PC-3 (cell line): ENCODE measurements at regions of chr2 and their contacts with region 1.

Region 1: DNA sequence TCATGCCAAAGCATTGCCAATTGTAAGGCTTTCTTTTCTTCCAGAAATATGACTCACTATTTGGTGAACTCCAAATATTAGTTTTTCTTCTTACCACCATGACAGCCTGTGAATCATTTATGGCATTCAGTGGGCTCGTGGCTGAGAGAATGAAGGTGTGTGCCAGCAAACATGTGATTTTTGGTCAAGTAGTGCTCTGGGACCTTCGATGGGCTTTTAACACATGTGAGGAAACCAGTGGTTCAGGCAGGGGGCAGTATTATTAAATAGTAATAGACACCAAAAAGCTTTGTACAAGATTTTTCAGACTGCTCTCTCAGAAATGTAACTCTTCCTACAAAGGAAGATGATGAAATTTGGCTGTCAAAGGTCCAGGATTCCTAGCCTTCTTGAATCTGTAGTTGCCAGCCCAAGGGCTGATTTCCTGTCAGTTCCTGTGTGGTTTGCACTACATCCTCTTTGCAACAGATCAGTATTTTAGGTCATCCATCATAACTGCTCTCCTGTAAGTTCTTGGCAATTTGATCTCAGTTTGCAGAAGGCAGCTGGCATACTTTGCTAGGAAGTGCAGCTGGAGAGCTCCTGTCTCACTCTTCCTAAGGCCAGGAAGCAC is 64.3 kb downstream of the BABAM2 start:
- DNase-seq: peak; percentile 94
- ATAC-seq: peak; percentile 80
- H3K4me3 ChIP-seq: peak overlapping the region; percentile 49; the same call in 1 of the 2 replicates
- H3K27ac ChIP-seq: peak overlapping the region; percentile 93
- H3K4me1 ChIP-seq: peaks cover 68% of the 10 kb centered on the region
- H3K27me3 ChIP-seq: no peaks in the 10 kb centered on the region
- CTCF ChIP-seq: peak; percentile 47

Region 2: DNA sequence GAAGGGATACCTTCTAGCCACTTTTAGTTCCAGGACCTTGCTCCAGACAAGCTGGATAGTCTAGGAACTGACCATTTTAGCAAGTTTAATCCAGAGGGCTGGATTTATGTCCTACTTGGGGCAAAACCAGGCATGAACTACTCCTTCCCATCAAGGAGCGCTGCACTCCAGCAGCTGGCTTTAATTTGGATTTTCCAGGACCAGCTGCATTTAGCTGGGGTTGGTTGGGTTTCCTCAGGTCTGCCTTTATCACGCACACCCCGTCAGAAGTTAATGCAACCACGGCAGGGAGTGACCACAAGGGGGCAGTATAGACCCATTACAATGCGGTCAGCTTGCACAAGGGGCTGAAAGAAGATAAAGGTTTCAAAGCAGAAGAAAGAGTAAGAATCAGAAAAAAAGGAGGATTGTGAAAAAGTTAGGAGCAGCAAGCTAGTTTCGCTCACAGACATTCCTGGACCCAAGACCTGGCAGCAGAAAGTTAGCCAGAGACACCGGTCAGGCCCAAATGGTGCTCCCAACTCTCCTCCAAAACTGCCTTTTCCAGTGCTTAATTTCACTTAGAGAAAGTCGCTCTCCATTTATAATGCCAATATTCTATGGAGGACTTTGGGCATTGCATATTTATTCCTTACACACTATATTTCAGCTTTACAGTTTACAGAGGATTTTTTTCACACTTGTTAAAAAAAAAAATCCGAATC is 251.1 kb before region 1 on chr2:
- CTCF ChIA-PET with region 1: no interaction called
- POLR2A ChIA-PET with region 1: interaction called, 3 read pairs
- intact Hi-C with region 1: loop called (anchors 10 kb)
- DNase-seq: peak; percentile 94
- ATAC-seq: peak; percentile 62
- H3K4me3 ChIP-seq: no peak overlapping the region
- H3K27ac ChIP-seq: no peak overlapping the region
- H3K4me1 ChIP-seq: peaks cover 30% of the 10 kb centered on the region
- H3K27me3 ChIP-seq: no peaks in the 10 kb centered on the region
- CTCF ChIP-seq: peak; percentile 96

Region 3: DNA sequence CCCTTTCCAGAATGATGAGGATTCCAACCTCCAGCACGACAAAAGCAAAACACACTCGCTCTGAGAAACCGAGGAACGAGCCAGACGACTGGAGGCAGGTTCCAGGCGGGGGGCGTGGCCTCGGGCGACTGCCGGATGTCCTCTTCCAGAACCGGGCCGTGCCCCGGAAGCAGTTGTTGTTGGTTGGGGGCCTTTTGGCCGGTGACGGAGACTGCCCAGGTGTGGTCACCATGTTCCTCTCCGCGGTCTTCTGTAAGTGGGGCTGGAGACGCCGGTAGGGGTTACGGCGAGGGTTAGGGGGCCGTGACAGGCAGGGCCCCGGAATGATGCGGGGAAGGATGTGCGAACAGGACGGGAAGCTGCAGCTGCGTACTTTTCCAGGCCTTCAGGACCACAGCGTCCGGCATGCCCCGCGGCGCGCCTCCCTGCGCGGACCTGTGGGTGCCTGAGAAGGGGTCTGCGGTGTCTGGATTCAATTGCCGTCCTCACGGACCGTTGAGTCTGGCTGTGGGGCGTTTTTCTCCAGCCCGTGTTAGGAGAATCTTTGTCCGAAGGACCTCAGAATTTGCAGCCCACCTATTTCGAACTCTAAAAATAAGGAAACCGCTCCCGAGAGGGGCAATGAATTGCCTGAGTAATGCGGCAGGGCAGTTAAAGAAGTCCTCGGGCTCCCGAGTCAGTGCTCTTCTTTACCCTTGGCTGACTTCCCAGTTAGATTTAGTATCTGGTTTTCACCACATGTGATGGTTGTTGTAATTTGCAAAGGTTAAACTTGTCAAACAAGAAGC is 183.1 kb before region 1 on chr2 and contains the start of gene MRPL33:
- CTCF ChIA-PET with region 1: no interaction called
- POLR2A ChIA-PET with region 1: no interaction called
- intact Hi-C with region 1: loop called (anchors 10 kb)
- DNase-seq: peak; percentile 93
- ATAC-seq: peak; percentile 92
- H3K4me3 ChIP-seq: peak within 1 kb of the TSS; percentile 96
- H3K27ac ChIP-seq: peak within 1 kb of the TSS; percentile 62
- H3K4me1 ChIP-seq: peaks cover 40% of the 10 kb centered on the region
- H3K27me3 ChIP-seq: no peaks in the 10 kb centered on the region
- CTCF ChIP-seq: no peak
- total RNA-seq, gene MRPL33: 95.7 and 110 TPM in 2 replicates

Region 4: GRCh38 chr2:27890146-27890923 is 64.5 kb before region 1 on chr2 and contains the starts of genes BABAM2 and RBKS:
- CTCF ChIA-PET with region 1: no interaction called
- POLR2A ChIA-PET with region 1: no interaction called
- intact Hi-C with region 1: loop called (anchors 1 kb)
- DNase-seq: peak; percentile 87
- ATAC-seq: peak; percentile 86
- H3K4me3 ChIP-seq: peak within 1 kb of the TSS; percentile 88
- H3K27ac ChIP-seq: peak within 1 kb of the TSS; percentile 79
- H3K4me1 ChIP-seq: peaks cover 27% of the 10 kb centered on the region
- H3K27me3 ChIP-seq: no peaks in the 10 kb centered on the region
- CTCF ChIP-seq: no peak
- total RNA-seq, gene BABAM2: 16.3 and 17.9 TPM in 2 replicates
- total RNA-seq, gene RBKS: 1.8 and 2.6 TPM in 2 replicates

Region 5: DNA sequence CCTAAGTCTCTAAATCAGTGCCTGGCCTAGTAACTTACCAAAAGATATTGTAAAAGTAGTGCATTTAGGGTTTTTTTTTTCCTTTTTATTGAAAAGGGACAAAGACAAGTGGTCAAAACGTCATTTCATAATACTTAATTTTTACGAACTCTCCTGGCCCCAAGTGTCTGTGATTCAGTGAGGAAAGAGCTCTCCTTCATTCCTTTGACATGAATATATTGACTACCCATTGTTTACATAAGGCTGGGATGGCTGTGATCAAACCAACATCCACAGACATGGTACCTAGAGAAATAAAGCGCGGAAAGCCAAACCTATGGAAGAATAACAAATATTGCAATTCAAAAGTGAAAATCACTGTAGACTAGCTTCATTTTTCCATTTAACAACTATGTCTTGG is 134.1 kb after region 1 on chr2:
- CTCF ChIA-PET with region 1: no interaction called
- POLR2A ChIA-PET with region 1: no interaction called
- intact Hi-C with region 1: loop called (anchors 2 kb)
- DNase-seq: peak; percentile 79
- ATAC-seq: peak; percentile 95
- H3K4me3 ChIP-seq: peak overlapping the region; percentile 39
- H3K27ac ChIP-seq: no peak overlapping the region
- H3K4me1 ChIP-seq: peaks cover 28% of the 10 kb centered on the region
- H3K27me3 ChIP-seq: no peaks in the 10 kb centered on the region
- CTCF ChIP-seq: no peak

Region 6: DNA sequence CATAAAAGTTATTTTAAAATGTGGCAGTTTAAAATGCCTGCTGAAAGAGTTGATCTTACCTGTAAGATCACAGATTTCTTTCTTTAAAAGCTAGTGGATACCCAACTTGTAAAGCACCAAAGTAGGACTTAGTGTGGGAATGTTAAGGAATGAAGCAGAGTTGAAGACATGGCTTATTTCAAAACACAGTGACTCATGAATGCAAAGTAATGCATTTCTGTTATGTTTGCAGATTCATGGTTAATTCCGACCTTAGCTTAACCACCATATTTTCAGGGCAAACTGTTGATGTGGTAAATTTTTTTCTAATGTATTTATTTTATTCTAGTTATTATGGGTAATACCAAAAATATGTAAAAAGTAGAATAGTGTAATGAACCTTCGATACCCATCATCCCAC is 231.0 kb after region 1 on chr2:
- CTCF ChIA-PET with region 1: no interaction called
- POLR2A ChIA-PET with region 1: no interaction called
- intact Hi-C with region 1: no loop called
- DNase-seq: peak; percentile 15
- ATAC-seq: no peak
- H3K4me3 ChIP-seq: no peak overlapping the region
- H3K27ac ChIP-seq: peak overlapping the region; percentile 2; the same call in 1 of the 2 replicates
- H3K4me1 ChIP-seq: peaks cover 11% of the 10 kb centered on the region; the same call in 1 of the 2 replicates
- H3K27me3 ChIP-seq: no peaks in the 10 kb centered on the region
- CTCF ChIP-seq: no peak

Region 7: GRCh38 chr2:28209261-28209691 is 254.4 kb after region 1 on chr2:
- CTCF ChIA-PET with region 1: no interaction called
- POLR2A ChIA-PET with region 1: interaction called, 10 read pairs
- intact Hi-C with region 1: no loop called
- DNase-seq: no peak
- ATAC-seq: no peak
- H3K4me3 ChIP-seq: no peak overlapping the region
- H3K27ac ChIP-seq: no peak overlapping the region
- H3K4me1 ChIP-seq: no peaks in the 10 kb centered on the region
- H3K27me3 ChIP-seq: no peaks in the 10 kb centered on the region
- CTCF ChIP-seq: no peak

Region 8: DNA sequence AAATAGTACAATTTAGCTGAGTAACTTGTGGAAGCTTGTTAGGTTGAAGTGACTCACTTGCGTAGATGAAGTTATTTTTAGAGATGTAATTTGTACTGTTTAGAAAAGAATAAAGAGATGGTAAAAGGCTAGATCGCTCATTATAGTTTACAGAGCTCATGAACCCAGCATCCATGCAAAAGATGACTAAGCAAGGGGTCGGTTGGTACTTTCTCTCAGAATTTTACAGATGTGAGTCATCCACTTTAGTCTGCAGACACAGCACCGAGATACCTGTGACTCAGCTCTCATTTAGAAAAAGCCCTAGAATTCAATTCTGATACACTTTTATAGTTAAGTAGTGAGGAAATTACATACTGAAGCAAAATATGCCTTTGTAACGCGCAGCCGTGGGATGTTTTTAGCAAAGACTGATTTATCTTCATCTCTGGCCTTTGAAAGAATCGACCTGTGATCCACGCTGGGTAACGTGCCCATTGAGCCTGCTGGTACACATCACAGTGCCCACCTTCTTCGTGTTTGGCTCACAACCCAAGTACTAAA is 321.3 kb after region 1 on chr2:
- CTCF ChIA-PET with region 1: no interaction called
- POLR2A ChIA-PET with region 1: no interaction called
- intact Hi-C with region 1: loop called (anchors 1 kb)
- DNase-seq: peak; percentile 98
- ATAC-seq: peak; percentile 89
- H3K4me3 ChIP-seq: peak overlapping the region; percentile 27; the same call in 1 of the 2 replicates
- H3K27ac ChIP-seq: peak overlapping the region; percentile 99
- H3K4me1 ChIP-seq: peaks cover 42% of the 10 kb centered on the region
- H3K27me3 ChIP-seq: no peaks in the 10 kb centered on the region
- CTCF ChIP-seq: no peak

Region 9: DNA sequence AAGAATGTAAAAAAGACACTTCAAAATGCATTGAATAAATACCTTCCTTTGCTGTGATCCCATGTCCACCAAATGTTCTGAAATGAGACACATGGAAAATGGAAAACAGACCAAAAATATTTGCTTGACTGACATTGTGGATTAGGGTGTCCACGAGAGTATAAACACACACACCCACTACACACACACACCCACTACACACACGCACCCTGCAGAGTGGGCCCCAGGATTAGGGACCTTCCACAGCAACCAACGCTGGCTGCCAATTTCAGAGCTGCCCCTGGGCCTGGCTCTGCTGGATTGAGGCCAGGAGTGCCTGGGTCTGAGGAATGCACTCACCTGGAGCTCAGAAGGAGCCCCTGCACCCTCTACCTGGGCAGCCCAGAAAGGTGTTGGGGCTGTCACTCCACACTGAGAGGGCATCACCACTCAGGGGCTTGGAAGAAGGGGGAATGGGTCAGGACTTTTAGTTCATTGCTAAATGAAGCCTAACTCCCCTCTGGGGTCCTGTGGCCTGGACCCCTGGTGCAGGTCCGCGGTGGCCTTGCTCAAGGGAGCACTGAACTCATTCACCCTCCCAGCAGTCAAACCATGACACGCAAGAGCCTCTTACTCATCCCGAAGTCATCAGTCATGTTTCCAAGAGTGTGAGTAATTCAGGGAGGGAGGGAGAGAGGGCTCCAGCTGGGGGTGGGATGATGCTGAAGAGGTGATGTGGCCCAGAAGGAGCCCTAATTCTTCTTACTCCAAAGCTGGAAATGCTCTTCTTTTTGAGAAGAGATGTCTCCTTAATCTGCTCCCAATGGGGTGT is 490.8 kb after region 1 on chr2:
- CTCF ChIA-PET with region 1: no interaction called
- POLR2A ChIA-PET with region 1: no interaction called
- intact Hi-C with region 1: no loop called
- DNase-seq: peak; percentile 98
- ATAC-seq: peak; percentile 89
- H3K4me3 ChIP-seq: peak overlapping the region; percentile 34; the same call in 1 of the 2 replicates
- H3K27ac ChIP-seq: peak overlapping the region; percentile 80
- H3K4me1 ChIP-seq: peaks cover 68% of the 10 kb centered on the region
- H3K27me3 ChIP-seq: no peaks in the 10 kb centered on the region
- CTCF ChIP-seq: no peak